Caco-2 (cell line): ENCODE measurements at regions of chr2 and their contacts with region 1.

Region 1: GRCh38 chr2:35410431-35411061 is 945.0 kb upstream of the CRIM1 start:
- DNase-seq: peak; percentile 55 to 76
- H3K4me3 ChIP-seq: no peak overlapping the region
- H3K4me3 Mint-ChIP-seq: no peak overlapping the region
- H3K27ac Mint-ChIP-seq: no peak overlapping the region
- H3K4me1 ChIP-seq: no peaks in the 10 kb centered on the region
- H3K4me1 Mint-ChIP-seq: no peaks in the 10 kb centered on the region
- H3K27me3 ChIP-seq: no peaks in the 10 kb centered on the region
- H3K27me3 Mint-ChIP-seq: no peaks in the 10 kb centered on the region
- CTCF ChIP-seq: peak; percentile 92 to 97

Region 2: GRCh38 chr2:34012715-34013302 is 1397.7 kb before region 1 on chr2:
- CTCF ChIA-PET with region 1: no interaction called
- POLR2A ChIA-PET with region 1: no interaction called
- intact Hi-C with region 1: loop called (anchors 2 kb)
- DNase-seq: peak; percentile 75 to 77
- H3K4me3 ChIP-seq: no peak overlapping the region
- H3K4me3 Mint-ChIP-seq: no peak overlapping the region
- H3K27ac Mint-ChIP-seq: no peak overlapping the region
- H3K4me1 ChIP-seq: 0 out of 2 replicates have a peak, but pooled peaks cover 3% of the 10 kb centered on the region
- H3K4me1 Mint-ChIP-seq: no peaks in the 10 kb centered on the region
- H3K27me3 ChIP-seq: no peaks in the 10 kb centered on the region
- H3K27me3 Mint-ChIP-seq: peaks cover 9% of the 10 kb centered on the region
- CTCF ChIP-seq: peak; percentile 80

Region 3: DNA sequence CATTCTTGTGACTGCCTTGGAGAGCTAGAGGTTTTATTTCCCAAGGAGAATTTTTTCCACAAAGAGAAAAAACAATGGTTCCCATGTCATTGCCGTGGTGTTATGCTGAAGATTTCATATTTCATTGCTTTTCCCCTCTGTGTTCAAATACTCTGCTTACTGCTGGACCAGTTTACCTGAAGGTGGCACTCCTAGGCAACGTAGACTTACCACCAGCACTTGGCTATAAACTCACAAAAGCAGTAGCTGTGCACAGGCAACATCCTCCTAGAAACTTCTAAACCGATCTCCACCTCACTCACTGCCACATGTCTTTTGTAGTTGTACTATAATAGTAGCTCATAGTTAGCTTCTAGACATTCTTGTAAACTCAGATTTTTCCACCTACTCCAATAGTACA is 374.7 kb before region 1 on chr2:
- CTCF ChIA-PET with region 1: no interaction called
- POLR2A ChIA-PET with region 1: no interaction called
- intact Hi-C with region 1: loop called (anchors 1 kb)
- DNase-seq: peak in 1 of 2 experiments; percentile 13
- H3K4me3 ChIP-seq: no peak overlapping the region
- H3K4me3 Mint-ChIP-seq: no peak overlapping the region
- H3K27ac Mint-ChIP-seq: no peak overlapping the region
- H3K4me1 ChIP-seq: no peaks in the 10 kb centered on the region
- H3K4me1 Mint-ChIP-seq: no peaks in the 10 kb centered on the region
- H3K27me3 ChIP-seq: no peaks in the 10 kb centered on the region
- H3K27me3 Mint-ChIP-seq: peaks cover 5% of the 10 kb centered on the region
- CTCF ChIP-seq: peak; percentile 22 to 26

Region 4: GRCh38 chr2:35081001-35081621 is 329.4 kb before region 1 on chr2:
- CTCF ChIA-PET with region 1: no interaction called
- POLR2A ChIA-PET with region 1: no interaction called
- intact Hi-C with region 1: no loop called
- DNase-seq: no peak
- H3K4me3 ChIP-seq: no peak overlapping the region
- H3K4me3 Mint-ChIP-seq: no peak overlapping the region
- H3K27ac Mint-ChIP-seq: no peak overlapping the region
- H3K4me1 ChIP-seq: no peaks in the 10 kb centered on the region
- H3K4me1 Mint-ChIP-seq: no peaks in the 10 kb centered on the region
- H3K27me3 ChIP-seq: no peaks in the 10 kb centered on the region
- H3K27me3 Mint-ChIP-seq: peaks cover 2% of the 10 kb centered on the region
- CTCF ChIP-seq: no peak

Region 5: DNA sequence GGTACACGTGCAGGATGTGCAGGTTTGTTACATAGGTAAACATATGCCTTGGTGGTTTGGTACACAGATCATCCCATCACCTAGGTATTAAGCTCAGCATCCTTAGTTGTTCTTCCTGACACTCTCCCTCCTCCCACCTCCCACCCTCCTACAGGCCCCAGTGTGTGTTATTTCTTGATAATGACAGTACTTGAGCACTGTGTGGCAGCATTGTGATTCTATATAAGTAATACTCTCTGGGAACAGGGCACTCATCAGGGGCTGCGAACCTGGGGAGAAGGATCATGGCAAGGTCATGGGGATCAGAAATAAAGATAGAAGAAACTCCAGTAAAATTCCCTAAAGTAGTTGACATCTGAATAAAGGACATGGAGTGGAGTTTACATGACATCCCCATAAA is 311.2 kb before region 1 on chr2:
- CTCF ChIA-PET with region 1: no interaction called
- POLR2A ChIA-PET with region 1: no interaction called
- intact Hi-C with region 1: loop called (anchors 1 kb)
- DNase-seq: no peak
- H3K4me3 ChIP-seq: no peak overlapping the region
- H3K4me3 Mint-ChIP-seq: no peak overlapping the region
- H3K27ac Mint-ChIP-seq: no peak overlapping the region
- H3K4me1 ChIP-seq: no peaks in the 10 kb centered on the region
- H3K4me1 Mint-ChIP-seq: no peaks in the 10 kb centered on the region
- H3K27me3 ChIP-seq: no peaks in the 10 kb centered on the region
- H3K27me3 Mint-ChIP-seq: no peaks in the 10 kb centered on the region
- CTCF ChIP-seq: no peak

Region 6: DNA sequence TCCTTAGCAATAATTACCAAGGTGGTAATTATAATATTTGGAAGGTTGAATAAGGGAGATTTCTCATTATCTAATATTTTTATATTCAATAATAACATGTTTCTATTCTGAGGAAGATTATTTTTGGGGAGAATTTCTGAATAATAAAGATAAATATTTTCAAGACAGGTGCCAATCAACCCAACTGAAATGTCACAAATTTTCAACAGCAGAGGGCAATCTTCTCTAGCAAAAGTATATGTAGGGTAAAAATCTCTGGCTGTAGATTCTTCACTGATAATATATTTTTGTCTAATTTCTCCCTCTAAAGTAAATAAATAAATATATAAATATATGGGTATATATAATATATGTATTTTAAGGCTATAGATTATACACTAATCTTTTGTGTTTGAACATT is 242.2 kb before region 1 on chr2:
- CTCF ChIA-PET with region 1: interaction called, 3 read pairs
- POLR2A ChIA-PET with region 1: no interaction called
- intact Hi-C with region 1: loop called (anchors 1 kb)
- DNase-seq: no peak
- H3K4me3 ChIP-seq: no peak overlapping the region
- H3K4me3 Mint-ChIP-seq: no peak overlapping the region
- H3K27ac Mint-ChIP-seq: no peak overlapping the region
- H3K4me1 ChIP-seq: no peaks in the 10 kb centered on the region
- H3K4me1 Mint-ChIP-seq: no peaks in the 10 kb centered on the region
- H3K27me3 ChIP-seq: no peaks in the 10 kb centered on the region
- H3K27me3 Mint-ChIP-seq: no peaks in the 10 kb centered on the region
- CTCF ChIP-seq: peak in 1 of 2 experiments; percentile 12

Region 7: DNA sequence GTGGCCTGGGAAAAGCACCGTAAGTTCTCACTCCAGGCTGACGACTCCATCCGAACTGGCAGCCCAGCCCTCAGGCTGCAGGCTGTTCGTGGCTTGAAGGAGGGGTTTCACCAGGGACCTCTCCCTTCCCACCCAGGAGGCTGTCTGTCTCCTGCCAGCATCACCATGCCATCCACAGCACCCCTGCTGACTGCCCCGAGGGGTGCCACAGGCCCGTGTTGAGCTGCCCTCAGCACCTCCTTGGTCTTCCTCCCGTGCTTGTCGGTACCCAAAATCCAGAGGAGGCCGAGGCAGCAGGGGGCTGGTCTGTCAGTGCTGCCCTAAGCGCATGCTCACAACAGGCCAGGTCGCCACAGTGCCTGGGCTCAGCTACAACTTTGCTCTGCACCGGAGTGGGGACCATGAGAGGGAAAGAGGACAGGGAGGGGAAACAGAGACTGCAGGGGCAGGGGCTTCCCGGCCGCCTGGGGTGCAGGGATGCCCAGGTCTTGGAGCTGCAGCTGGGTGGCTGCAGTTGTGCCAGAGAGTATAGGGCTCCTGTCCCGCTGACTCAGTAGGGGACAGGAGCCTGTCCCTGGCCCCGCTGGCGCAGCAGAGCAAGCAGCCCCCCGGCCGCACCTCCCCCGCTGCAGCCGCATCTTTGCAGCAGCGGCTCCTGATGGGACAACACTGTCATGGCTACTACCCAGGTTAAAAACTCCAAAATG is 18.7 kb before region 1 on chr2:
- CTCF ChIA-PET with region 1: no interaction called
- POLR2A ChIA-PET with region 1: no interaction called
- intact Hi-C with region 1: no loop called
- DNase-seq: no peak
- H3K4me3 ChIP-seq: no peak overlapping the region
- H3K4me3 Mint-ChIP-seq: no peak overlapping the region
- H3K27ac Mint-ChIP-seq: no peak overlapping the region
- H3K4me1 ChIP-seq: no peaks in the 10 kb centered on the region
- H3K4me1 Mint-ChIP-seq: no peaks in the 10 kb centered on the region
- H3K27me3 ChIP-seq: no peaks in the 10 kb centered on the region
- H3K27me3 Mint-ChIP-seq: no peaks in the 10 kb centered on the region
- CTCF ChIP-seq: no peak